Body of pancreas (tissue), 4 donors: ENCODE measurements at regions of chr4 and their contacts with region 1.

Region 1: GRCh38 chr4:52983563-52984303 is 121.6 kb downstream of the RASL11B start:
- DNase-seq: peak in 1 of 4 donors; percentile 38
- ATAC-seq: peak; percentile 82
- H3K4me3 ChIP-seq: no peak overlapping the region
- H3K27ac ChIP-seq: peak overlapping the region in 2 of 4 donors; percentile 33 to 35
- H3K4me1 ChIP-seq: peaks cover 21% of the 10 kb centered on the region
- H3K27me3 ChIP-seq: no peaks in the 10 kb centered on the region
- CTCF ChIP-seq: peak; percentile 52 to 75 (median 66)
- POLR2A ChIP-seq: no peak

Region 2: GRCh38 chr4:52376132-52376704 is 607.5 kb before region 1 on chr4:
- intact Hi-C with region 1: loop called (anchors 10 kb)
- DNase-seq: peak in 3 of 4 donors; percentile 24 to 49 (median 44)
- ATAC-seq: no peak
- H3K4me3 ChIP-seq: no peak overlapping the region
- H3K27ac ChIP-seq: no peak overlapping the region
- H3K4me1 ChIP-seq: no peaks in the 10 kb centered on the region
- H3K27me3 ChIP-seq: no peaks in the 10 kb centered on the region
- CTCF ChIP-seq: peak; percentile 32 to 74 (median 58)
- POLR2A ChIP-seq: no peak

Region 3: DNA sequence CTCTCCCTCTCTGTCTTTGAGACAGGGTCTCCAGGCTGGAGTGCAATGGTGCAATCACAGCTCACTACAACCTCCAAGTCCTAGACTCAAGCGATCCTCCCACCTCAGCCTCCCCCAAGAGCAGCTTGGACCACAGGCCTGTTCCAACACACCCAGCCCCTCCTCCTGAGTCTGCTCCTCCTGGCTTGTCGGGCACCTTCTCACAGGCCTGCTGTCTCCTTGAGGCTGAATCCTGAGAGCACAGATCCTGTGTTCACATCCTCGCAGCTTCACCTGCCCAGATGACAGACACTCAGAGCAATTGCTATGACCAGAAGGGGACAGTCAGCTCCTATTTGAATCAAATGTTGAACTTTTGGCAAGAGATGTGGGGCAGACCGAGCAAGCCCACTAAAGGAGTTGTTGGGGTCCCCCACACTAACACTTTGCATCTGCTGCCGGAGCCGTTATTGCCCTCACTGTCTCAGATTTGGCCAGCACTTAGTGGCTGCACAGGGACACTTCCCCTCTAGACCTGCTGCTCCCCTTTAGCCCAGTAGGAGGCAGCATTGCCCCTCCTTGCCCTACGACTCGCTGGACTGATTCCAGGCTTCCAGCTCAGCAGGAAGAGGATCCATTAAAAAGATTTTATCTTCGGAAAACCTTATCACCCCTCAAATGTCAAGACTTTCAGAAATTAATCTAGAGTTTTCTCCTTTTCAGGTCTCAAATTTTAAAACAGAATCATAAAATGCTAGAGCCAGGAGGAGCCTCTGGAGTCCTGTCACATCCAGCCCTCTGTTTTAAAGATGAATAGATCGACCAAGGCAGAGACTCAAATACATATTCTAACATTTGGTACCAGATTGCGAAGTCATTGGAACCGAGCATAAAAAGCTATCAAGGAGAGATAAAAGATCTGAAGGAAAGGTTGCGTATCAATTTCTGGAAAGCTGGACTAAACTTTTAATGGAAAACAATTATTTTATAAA is 438.3 kb before region 1 on chr4:
- intact Hi-C with region 1: loop called (anchors 5 kb)
- DNase-seq: peak; percentile 81 to 88 (median 84)
- ATAC-seq: peak; percentile 86
- H3K4me3 ChIP-seq: no peak overlapping the region
- H3K27ac ChIP-seq: no peak overlapping the region
- H3K4me1 ChIP-seq: no peaks in the 10 kb centered on the region
- H3K27me3 ChIP-seq: no peaks in the 10 kb centered on the region
- CTCF ChIP-seq: peak; percentile 89 to 96 (median 89)
- POLR2A ChIP-seq: no peak